ENCODE measurements at regions of chr7 and their contacts with region 1.

Region 1: GRCh38 chr7:149195180-149196150 is at the start of gene ZNF282:
- DNase-seq: peak; percentile 90 to 94
- H3K4me3 ChIP-seq: peak within 1 kb of the TSS; percentile 91
- H3K27ac ChIP-seq: peak within 1 kb of the TSS; percentile 75
- H3K4me1 ChIP-seq: peaks cover 17% of the 10 kb centered on the region
- H3K27me3 ChIP-seq: no peaks in the 10 kb centered on the region
- CTCF ChIP-seq: peak; percentile 69
- total RNA-seq, gene ZNF282: 32.5 and 35.9 TPM in 2 replicates

Region 2: GRCh38 chr7:149180722-149181449 is 14.6 kb before region 1 on chr7:
- CTCF ChIA-PET with region 1: no interaction called
- POLR2A ChIA-PET with region 1: interaction called, 20 read pairs
- intact Hi-C with region 1: no loop called
- DNase-seq: no peak
- H3K4me3 ChIP-seq: no peak overlapping the region
- H3K27ac ChIP-seq: no peak overlapping the region
- H3K4me1 ChIP-seq: no peaks in the 10 kb centered on the region
- H3K27me3 ChIP-seq: no peaks in the 10 kb centered on the region
- CTCF ChIP-seq: no peak

Region 3: DNA sequence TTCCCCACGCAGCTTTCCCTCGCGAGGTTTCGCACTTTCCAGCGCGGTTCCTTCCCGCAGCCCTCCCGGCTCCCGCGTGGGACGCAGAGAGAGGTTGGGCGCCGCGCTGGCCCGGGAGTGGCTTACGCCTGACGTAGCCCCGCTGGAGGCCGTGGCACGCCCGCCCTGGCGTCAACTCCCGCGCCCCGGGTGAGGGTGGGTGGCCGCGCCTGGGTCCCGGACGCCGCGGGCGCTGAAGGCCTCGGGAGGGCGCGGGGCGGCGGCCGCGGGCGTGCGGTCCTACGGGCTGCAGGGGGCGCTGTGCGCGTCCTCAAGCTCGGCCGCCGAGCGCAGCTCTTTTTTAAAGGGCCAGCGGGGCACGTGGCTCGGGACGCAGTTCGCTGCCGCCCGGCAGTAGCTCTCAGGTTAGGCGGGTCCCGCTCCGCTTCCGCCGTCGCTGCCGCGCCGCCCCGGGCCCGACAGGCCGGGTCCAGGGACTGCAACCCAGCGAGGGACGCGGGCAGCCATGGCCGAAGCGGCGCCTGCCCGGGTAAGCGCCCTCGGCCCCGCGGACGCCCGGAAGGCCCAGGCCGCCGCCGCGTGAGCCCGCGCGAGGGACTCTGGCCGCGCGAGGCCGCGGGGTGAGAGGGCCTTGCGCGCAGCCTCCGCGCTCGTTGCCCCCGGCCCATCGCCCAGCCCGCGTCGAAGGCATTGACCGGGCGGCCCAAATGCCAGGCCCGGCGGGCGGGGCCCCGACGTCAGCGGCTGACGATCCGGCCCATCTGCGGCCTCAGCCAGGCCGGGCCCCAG is 66.6 kb after region 1 on chr7 and contains the start of gene ZNF783:
- CTCF ChIA-PET with region 1: interaction called, 9 read pairs
- POLR2A ChIA-PET with region 1: no interaction called
- intact Hi-C with region 1: loop called (anchors 1 kb)
- DNase-seq: peak; percentile 74 to 90
- H3K4me3 ChIP-seq: peak within 1 kb of the TSS; percentile 89
- H3K27ac ChIP-seq: peak within 1 kb of the TSS; percentile 74
- H3K4me1 ChIP-seq: peaks cover 16% of the 10 kb centered on the region; the same call in 1 of the 2 replicates
- H3K27me3 ChIP-seq: no peaks in the 10 kb centered on the region
- CTCF ChIP-seq: peak; percentile 68
- total RNA-seq, gene ZNF783: 15.8 and 22.2 TPM in 2 replicates

Region 4: GRCh38 chr7:149284850-149285626 is 89.6 kb after region 1 on chr7:
- CTCF ChIA-PET with region 1: interaction called, 3 read pairs
- POLR2A ChIA-PET with region 1: no interaction called
- intact Hi-C with region 1: loop called (anchors 2 kb)
- DNase-seq: peak; percentile 90 to 100
- H3K4me3 ChIP-seq: peak overlapping the region; percentile 62
- H3K27ac ChIP-seq: no peak overlapping the region
- H3K4me1 ChIP-seq: peaks cover 25% of the 10 kb centered on the region
- H3K27me3 ChIP-seq: no peaks in the 10 kb centered on the region
- CTCF ChIP-seq: no peak

Region 5: DNA sequence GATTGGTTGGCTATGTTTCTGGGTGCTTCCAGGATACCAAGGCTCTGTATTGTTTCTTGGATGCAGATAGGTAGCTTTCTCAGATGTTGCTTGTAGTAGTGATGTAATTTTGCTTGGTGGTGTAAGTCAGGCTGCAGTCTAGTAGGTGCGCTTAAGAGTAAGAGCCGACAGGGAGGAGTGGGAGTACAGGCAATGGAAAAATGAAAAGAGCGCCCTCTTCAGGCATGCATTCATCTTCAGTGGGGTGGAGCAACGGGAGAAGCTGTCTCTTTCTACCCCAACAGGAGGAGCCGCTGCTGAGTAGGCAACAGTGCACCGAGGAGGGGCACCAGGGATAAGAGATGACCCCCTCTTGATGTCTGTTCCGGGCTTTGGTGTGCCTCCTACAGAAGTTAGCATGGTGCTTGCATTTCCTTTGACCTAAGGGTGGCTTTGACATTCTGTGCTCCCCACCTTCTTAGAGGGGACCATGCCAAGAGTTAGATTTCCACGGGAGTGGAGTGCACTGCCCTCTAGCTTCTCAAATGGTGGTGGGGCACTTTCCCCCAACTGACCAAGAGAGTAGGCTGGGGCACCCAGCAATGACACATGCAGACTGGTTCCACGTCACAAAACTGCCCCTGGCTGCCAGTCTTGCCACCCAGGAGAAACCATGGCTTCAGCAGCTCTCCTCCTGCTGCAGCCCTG is 122.7 kb after region 1 on chr7:
- CTCF ChIA-PET with region 1: no interaction called
- POLR2A ChIA-PET with region 1: no interaction called
- intact Hi-C with region 1: no loop called
- DNase-seq: no peak
- H3K4me3 ChIP-seq: no peak overlapping the region
- H3K27ac ChIP-seq: no peak overlapping the region
- H3K4me1 ChIP-seq: no peaks in the 10 kb centered on the region
- H3K27me3 ChIP-seq: no peaks in the 10 kb centered on the region
- CTCF ChIP-seq: no peak; the same call in 1 of the 2 replicates